ENCODE measurements at regions of chr13 and their contacts with region 1.

Region 1: DNA sequence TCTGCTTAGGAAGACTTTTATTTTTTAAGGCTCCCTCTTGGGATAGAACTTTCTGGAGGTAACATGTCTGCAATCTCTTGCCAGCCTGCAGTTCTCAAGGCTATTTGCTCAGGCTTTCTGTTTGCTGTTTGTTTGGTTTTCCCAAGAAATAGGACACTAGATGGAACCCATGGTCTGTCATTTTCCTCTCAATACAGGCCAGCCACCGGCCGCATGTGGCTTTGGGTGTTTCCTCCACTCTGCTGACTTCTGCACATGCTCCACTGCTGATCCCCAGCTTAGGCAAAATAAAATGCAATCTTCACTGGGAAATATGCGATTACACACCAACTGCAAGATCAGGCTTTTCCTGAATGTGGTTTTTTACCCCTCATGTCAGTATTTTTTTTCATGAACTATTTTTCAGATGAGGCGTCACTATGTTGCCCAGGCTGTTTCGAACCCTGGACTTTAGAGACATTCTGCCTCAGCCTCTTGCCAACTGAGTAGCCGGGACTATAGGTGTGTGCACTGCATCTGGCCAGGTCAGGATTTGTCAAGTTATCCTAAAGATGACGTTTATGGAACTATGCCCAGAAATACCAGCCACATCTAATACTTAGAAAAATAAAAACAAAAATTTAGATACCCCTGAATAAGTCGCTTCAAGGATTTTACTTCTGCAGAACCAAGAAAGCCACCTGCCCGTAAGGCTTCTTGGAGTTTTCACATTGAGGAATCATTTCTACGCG is 94.3 kb upstream of the PABPC3 start:
- DNase-seq: no peak
- H3K4me3 ChIP-seq: no peak overlapping the region
- H3K27ac ChIP-seq: no peak overlapping the region
- H3K4me1 ChIP-seq: no peaks in the 10 kb centered on the region
- H3K27me3 ChIP-seq: peaks cover 0 to 2% of the 10 kb centered on the region in 2 experiments
- CTCF ChIP-seq: no peak
- POLR2A ChIP-seq: no peak

Region 2: DNA sequence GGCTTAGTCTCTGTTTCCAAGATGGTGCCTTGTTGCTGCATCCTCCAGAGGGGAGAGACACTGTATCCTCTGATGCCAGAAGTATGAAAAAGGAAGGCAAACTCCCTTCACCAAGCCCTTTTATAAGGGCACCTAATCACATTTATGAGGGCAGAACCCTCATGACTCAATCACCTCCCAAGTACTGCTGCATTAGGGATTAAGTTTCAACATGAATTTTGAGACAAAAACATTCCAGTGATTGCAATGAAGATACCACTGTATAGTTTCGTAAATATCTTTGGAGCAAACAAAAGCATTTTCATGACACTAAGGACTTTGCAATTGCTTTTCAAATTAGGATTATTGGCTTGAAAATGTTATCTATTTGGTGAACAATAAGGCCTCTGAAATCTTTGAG is 173.8 kb before region 1 on chr13:
- CTCF ChIA-PET with region 1: no interaction called
- POLR2A ChIA-PET with region 1: no interaction called
- dilution Hi-C with region 1: no loop called
- intact Hi-C with region 1: no loop called
- DNase-seq: no peak
- H3K4me3 ChIP-seq: no peak overlapping the region
- H3K27ac ChIP-seq: no peak overlapping the region
- H3K4me1 ChIP-seq: no peaks in the 10 kb centered on the region
- H3K27me3 ChIP-seq: peaks cover 0 to 3% of the 10 kb centered on the region in 2 experiments
- CTCF ChIP-seq: no peak
- POLR2A ChIP-seq: no peak

Region 3: GRCh38 chr13:25037057-25037813 is 35.6 kb after region 1 on chr13:
- CTCF ChIA-PET with region 1: interaction called, 16 read pairs
- POLR2A ChIA-PET with region 1: no interaction called
- dilution Hi-C with region 1: no loop called
- intact Hi-C with region 1: loop called (anchors 1 kb)
- DNase-seq: peak; percentile 46
- H3K4me3 ChIP-seq: no peak overlapping the region
- H3K27ac ChIP-seq: no peak overlapping the region
- H3K4me1 ChIP-seq: no peaks in the 10 kb centered on the region
- H3K27me3 ChIP-seq: peaks cover 8 to 9% of the 10 kb centered on the region in 2 experiments
- CTCF ChIP-seq: peak; percentile 70 to 77
- POLR2A ChIP-seq: no peak

Region 4: GRCh38 chr13:25114220-25114619 is 112.6 kb after region 1 on chr13:
- CTCF ChIA-PET with region 1: interaction called, 33 read pairs
- POLR2A ChIA-PET with region 1: no interaction called
- dilution Hi-C with region 1: no loop called
- intact Hi-C with region 1: no loop called
- DNase-seq: peak; percentile 75
- H3K4me3 ChIP-seq: no peak overlapping the region
- H3K27ac ChIP-seq: no peak overlapping the region
- H3K4me1 ChIP-seq: no peaks in the 10 kb centered on the region
- H3K27me3 ChIP-seq: peaks cover 6 to 7% of the 10 kb centered on the region in 2 experiments
- CTCF ChIP-seq: peak; percentile 82 to 85
- POLR2A ChIP-seq: no peak

Region 5: GRCh38 chr13:25286969-25287961 is 285.6 kb after region 1 on chr13 and contains the start of gene MTMR6:
- CTCF ChIA-PET with region 1: no interaction called
- POLR2A ChIA-PET with region 1: no interaction called
- dilution Hi-C with region 1: no loop called
- intact Hi-C with region 1: no loop called
- DNase-seq: peak; percentile 95
- H3K4me3 ChIP-seq: peak within 1 kb of the TSS; percentile 88 to 91 (median 89)
- H3K27ac ChIP-seq: peak within 1 kb of the TSS; percentile 92
- H3K4me1 ChIP-seq: peaks cover 11% of the 10 kb centered on the region
- H3K27me3 ChIP-seq: peaks cover 21 to 26% of the 10 kb centered on the region in 2 experiments
- CTCF ChIP-seq: peak; percentile 100
- POLR2A ChIP-seq: peak; percentile 45
- total RNA-seq, gene MTMR6: 20.9 and 21.7 TPM in 2 replicates